Caco-2 (cell line): ENCODE measurements at regions of chr22 and their contacts with region 1.

Region 1: DNA sequence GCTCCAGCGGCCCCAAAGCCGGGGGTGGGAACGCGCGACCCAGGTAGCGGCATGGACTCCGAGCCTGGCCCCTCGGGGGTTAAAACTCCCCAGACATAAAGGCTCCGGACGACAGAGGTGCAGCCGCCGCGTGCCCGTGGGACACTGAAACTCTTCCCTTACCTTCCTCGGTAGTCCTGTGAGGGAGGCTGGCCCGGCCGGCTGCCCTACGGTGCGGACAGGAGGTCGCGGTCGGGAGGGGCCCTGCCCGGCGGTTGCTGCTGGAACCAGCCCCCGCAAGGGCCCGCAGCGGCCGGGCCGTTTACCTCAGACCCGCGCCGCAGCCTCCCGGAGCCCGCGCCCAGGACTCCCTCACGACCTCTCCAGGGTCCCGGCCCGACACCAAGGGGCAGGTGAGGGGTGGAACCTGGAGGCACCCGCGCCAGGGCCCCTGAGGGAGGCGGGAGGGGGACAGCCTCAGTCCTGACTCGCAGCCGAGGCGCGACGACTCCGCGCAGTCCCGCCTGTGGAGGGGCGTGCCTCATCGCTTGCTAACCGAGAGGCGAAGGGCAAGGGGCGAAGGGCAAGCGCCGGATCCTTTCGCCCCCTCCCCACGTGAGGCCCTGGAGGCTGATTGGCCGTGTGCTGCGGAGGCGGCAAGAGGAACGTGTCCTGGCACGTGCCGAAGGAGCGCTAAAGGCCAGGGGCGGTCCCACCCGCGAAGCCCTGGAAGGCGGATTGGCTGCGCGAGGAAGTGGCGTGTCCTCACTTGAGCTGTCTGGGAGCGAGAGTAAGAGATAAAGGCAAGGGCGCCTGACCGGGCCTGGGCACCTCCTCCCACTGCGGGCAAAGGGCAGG is at the start of gene UPB1:
- DNase-seq: peak; percentile 92
- H3K4me3 ChIP-seq: peak within 1 kb of the TSS; percentile 68
- H3K4me3 Mint-ChIP-seq: peak within 1 kb of the TSS; percentile 84
- H3K27ac Mint-ChIP-seq: peak within 1 kb of the TSS; percentile 88
- H3K4me1 ChIP-seq: peaks cover 55% of the 10 kb centered on the region
- H3K4me1 Mint-ChIP-seq: peaks cover 50% of the 10 kb centered on the region
- H3K27me3 ChIP-seq: no peaks in the 10 kb centered on the region
- H3K27me3 Mint-ChIP-seq: no peaks in the 10 kb centered on the region
- CTCF ChIP-seq: no peak
- total RNA-seq, gene UPB1: 5.6 and 6.7 TPM in 2 replicates

Region 2: DNA sequence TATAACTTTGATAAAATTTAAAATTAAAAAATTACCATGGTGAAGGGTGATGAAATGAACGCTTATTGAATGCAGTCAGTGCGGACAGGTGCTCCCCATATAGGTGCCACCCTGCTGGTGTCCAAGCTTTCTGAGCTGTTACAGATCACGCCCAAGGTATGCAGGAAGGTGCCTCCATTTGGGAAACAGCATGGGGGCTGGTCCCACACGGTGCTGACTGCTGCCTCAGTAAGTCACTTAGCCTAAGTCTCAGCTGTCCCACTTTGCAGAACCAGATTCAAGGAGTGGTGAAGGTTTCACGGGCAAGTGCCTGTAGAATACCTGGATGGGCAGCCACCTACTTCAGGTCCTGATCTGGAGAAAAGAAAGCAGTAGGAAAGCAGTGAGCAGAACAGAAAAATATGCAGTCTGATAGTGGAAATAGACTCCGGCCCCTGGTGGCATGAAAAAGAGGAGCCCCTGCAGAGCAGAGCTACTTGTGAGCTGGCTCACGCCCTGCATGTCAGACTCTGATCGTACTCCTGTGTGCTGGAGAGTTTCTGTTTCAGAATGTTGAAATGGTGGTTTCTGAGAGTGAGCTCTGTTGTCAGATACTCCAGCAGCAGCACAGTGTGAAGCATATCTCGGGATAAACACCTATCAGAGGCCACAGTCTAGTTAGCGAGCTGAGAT is 34.2 kb before region 1 on chr22:
- CTCF ChIA-PET with region 1: no interaction called
- POLR2A ChIA-PET with region 1: no interaction called
- intact Hi-C with region 1: no loop called
- DNase-seq: no peak
- H3K4me3 ChIP-seq: no peak overlapping the region
- H3K4me3 Mint-ChIP-seq: no peak overlapping the region
- H3K27ac Mint-ChIP-seq: no peak overlapping the region
- H3K4me1 ChIP-seq: peaks cover 20% of the 10 kb centered on the region
- H3K4me1 Mint-ChIP-seq: peaks cover 11% of the 10 kb centered on the region
- H3K27me3 ChIP-seq: no peaks in the 10 kb centered on the region
- H3K27me3 Mint-ChIP-seq: no peaks in the 10 kb centered on the region
- CTCF ChIP-seq: no peak

Region 3: GRCh38 chr22:24510637-24511625 is 16.2 kb after region 1 on chr22:
- CTCF ChIA-PET with region 1: interaction called, 10 read pairs
- POLR2A ChIA-PET with region 1: no interaction called
- intact Hi-C with region 1: loop called (anchors 1 kb)
- DNase-seq: peak; percentile 66 to 89
- H3K4me3 ChIP-seq: no peak overlapping the region
- H3K4me3 Mint-ChIP-seq: peak overlapping the region; percentile 35
- H3K27ac Mint-ChIP-seq: peak overlapping the region; percentile 86
- H3K4me1 ChIP-seq: peaks cover 92% of the 10 kb centered on the region
- H3K4me1 Mint-ChIP-seq: peaks cover 62% of the 10 kb centered on the region
- H3K27me3 ChIP-seq: no peaks in the 10 kb centered on the region
- H3K27me3 Mint-ChIP-seq: no peaks in the 10 kb centered on the region
- CTCF ChIP-seq: no peak